PC-9 (cell line): ENCODE measurements at regions of chr2 and their contacts with region 1.

Region 1: GRCh38 chr2:158125756-158126498 is 24.3 kb downstream of the UPP2 start:
- DNase-seq: no peak
- H3K4me3 ChIP-seq: no peak overlapping the region
- H3K27ac ChIP-seq: no peak overlapping the region
- H3K4me1 ChIP-seq: no peaks in the 10 kb centered on the region; the same call in 1 of the 2 replicates
- H3K27me3 ChIP-seq: no peaks in the 10 kb centered on the region
- CTCF ChIP-seq: no peak

Region 2: DNA sequence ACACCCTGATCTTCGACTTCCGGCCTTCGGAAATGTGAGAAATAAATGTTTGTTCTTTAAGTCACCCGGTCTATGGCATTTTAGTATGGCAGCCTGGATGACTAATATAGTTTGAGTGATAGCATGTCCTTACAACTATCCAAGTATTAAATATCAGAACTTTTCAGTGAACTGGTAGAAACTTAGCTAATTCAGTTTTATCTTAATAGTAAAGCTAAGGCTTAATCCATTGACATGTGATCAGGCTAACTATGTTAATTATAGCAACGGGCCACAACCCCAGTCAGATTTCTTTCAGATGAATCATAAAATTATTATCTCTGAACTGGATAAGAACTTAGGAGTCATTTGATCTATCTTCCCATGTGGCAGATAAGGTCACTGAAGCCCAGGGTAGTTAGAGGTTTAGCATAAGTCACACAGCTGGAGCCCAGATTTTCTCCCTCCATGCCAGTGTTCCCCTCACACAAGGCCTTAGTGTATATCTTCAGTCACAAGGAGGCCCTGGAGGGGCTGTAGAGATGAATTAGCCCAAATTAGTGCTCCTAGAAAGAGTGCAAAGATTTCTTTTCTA is 65.0 kb before region 1 on chr2:
- CTCF ChIA-PET with region 1: no interaction called
- POLR2A ChIA-PET with region 1: no interaction called
- intact Hi-C with region 1: no loop called
- DNase-seq: no peak
- H3K4me3 ChIP-seq: no peak overlapping the region
- H3K27ac ChIP-seq: no peak overlapping the region
- H3K4me1 ChIP-seq: no peaks in the 10 kb centered on the region
- H3K27me3 ChIP-seq: no peaks in the 10 kb centered on the region
- CTCF ChIP-seq: no peak

Region 3: GRCh38 chr2:158487419-158487818 is 361.5 kb after region 1 on chr2:
- CTCF ChIA-PET with region 1: no interaction called
- POLR2A ChIA-PET with region 1: no interaction called
- intact Hi-C with region 1: no loop called
- DNase-seq: no peak
- H3K4me3 ChIP-seq: no peak overlapping the region
- H3K27ac ChIP-seq: no peak overlapping the region
- H3K4me1 ChIP-seq: peaks cover 7% of the 10 kb centered on the region; the same call in 1 of the 2 replicates
- H3K27me3 ChIP-seq: no peaks in the 10 kb centered on the region
- CTCF ChIP-seq: no peak

Region 4: DNA sequence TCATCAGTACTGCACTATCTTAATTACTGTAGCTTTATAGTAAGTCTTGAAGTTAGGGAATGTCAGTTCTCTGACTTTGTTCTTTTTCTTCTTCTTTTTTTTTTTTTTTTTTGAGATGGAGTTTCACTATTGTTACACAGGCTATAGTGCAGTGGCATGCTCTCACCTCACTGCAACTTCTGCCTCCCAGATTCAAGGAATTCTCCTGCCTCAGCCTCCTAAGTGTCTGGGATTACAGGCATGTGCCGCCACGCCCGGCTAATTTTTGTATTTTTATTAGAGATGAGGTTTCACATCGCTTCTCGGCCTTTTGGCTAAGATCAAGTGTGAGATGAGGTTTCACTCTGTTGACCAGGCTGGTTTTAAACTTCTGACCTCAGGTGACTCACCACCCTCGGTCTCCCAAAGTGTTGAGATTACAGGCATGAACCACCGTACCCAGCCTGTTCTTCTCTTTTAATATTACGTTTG is 800.6 kb after region 1 on chr2:
- CTCF ChIA-PET with region 1: no interaction called
- POLR2A ChIA-PET with region 1: interaction called, 10 read pairs
- intact Hi-C with region 1: no loop called
- DNase-seq: peak; percentile 45 to 81
- H3K4me3 ChIP-seq: peak overlapping the region; percentile 38; the same call in 1 of the 2 replicates
- H3K27ac ChIP-seq: peak overlapping the region; percentile 76
- H3K4me1 ChIP-seq: peaks cover 44% of the 10 kb centered on the region
- H3K27me3 ChIP-seq: no peaks in the 10 kb centered on the region
- CTCF ChIP-seq: no peak